ENCODE measurements at regions of chr10 and their contacts with region 1.

Region 1: DNA sequence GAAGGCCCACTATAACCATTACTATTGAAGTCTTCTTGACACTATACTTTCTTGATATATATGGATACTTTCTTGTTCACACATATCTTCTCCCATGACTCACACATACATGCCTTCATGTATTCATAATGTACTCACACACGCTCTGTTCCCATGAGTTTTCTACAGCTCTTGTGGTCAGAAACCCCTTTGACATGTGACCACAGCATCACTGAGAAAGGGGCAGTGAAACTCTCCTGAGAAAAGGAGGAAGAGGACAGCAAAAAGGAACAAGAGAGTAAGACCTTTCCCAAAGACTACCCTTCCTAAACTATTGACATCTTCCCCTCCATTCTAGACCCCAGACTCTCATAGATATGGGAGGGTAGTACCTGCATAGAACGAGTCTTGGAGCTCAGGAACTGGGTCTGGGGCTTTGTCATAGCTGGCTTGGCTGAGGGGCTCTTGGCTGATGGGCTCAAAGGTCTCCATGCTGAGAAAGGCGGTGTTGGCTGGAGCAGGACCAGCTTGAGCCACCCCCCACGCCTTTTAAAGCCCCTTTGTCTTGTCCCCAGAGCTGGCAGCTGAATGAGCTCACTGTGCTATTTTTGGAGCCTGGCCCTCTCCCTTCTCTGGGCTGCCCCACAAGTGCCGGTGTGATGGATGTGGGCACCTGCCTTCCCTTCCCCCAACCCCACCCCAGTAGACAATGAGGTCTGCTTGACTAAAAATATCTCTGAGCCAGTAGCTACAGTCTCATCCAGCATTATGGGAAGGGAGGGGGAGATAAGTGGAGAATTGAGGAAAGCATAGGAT is 5.1 kb downstream of the SYNPO2L start:
- DNase-seq: peak; percentile 58 to 81
- ATAC-seq: peak; percentile 42 to 75 (median 62)
- H3K4me3 ChIP-seq: peak overlapping the region in 7 of 10 donors; percentile 14 to 87 (median 29)
- H3K27ac ChIP-seq: peak overlapping the region; percentile 64 to 97 (median 88)
- H3K4me1 ChIP-seq: peaks cover 9 to 64% (median 32%) of the 10 kb centered on the region in 9 donors
- H3K27me3 ChIP-seq: no peaks in the 10 kb centered on the region
- CTCF ChIP-seq: no peak

Region 2: GRCh38 chr10:73717556-73717955 is 66.8 kb after region 1 on chr10:
- intact Hi-C with region 1: loop called in 1 of 10 experiments (anchors 10 kb)
- DNase-seq: no peak
- ATAC-seq: peak in 4 of 8 donors; percentile 33 to 49 (median 38)
- H3K4me3 ChIP-seq: no peak overlapping the region
- H3K27ac ChIP-seq: peak overlapping the region in 5 of 10 donors; percentile 7 to 74 (median 23)
- H3K4me1 ChIP-seq: peaks cover 0 to 27% (median 0%) of the 10 kb centered on the region in 9 donors
- H3K27me3 ChIP-seq: no peaks in the 10 kb centered on the region
- CTCF ChIP-seq: no peak

Region 3: GRCh38 chr10:73730153-73730906 is 79.6 kb after region 1 on chr10:
- intact Hi-C with region 1: loop called in 3 of 10 experiments (anchors 5 kb)
- DNase-seq: peak; percentile 86 to 88
- ATAC-seq: peak; percentile 89 to 97 (median 94)
- H3K4me3 ChIP-seq: peak overlapping the region; percentile 62 to 97 (median 82)
- H3K27ac ChIP-seq: peak overlapping the region; percentile 63 to 96 (median 92)
- H3K4me1 ChIP-seq: peaks cover 7 to 58% (median 28%) of the 10 kb centered on the region in 9 donors
- H3K27me3 ChIP-seq: no peaks in the 10 kb centered on the region
- CTCF ChIP-seq: no peak

Region 4: DNA sequence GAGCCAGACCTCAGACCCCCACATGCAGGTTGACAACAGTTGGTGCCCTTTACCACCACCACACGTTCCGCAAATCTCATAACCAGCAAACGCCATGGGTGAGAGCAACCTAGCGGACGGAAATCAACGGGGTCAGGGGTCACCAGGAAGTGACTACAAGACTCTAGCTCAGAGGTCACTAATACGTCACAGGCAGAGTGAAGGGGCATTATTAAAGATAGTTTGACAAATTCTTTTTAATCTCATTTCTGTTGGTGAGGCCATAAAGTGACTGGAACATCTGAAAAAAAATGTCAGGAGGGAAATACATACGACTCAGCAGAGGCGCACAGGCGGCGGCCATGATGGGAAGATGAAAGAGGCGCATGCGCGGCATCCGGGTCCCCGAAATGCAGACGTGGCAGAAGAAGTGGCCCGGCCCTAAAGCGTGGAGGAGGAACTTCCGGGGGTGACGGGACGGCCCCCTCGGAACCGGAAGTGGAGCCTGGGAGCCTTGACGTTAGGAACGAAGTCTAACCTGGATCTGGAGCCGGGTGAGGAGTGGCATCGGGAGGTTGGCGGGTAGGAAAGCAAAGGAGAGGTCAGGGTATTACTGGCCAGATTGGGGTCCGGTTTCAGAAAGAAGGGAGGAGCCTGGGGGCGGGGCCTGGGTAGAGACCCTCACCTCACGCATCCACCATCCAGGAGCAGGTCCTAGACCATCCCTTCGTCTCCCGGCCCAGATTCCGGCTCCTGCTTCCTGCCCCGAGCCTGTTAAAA is 93.3 kb after region 1 on chr10 and contains the start of gene SEC24C:
- intact Hi-C with region 1: loop called in 1 of 10 experiments (anchors 5 kb)
- DNase-seq: peak; percentile 97
- ATAC-seq: peak; percentile 93 to 98 (median 97)
- H3K4me3 ChIP-seq: peak within 1 kb of the TSS; percentile 69 to 94 (median 83)
- H3K27ac ChIP-seq: peak within 1 kb of the TSS; percentile 83 to 99 (median 92)
- H3K4me1 ChIP-seq: peaks cover 15 to 53% (median 43%) of the 10 kb centered on the region in 9 donors
- H3K27me3 ChIP-seq: no peaks in the 10 kb centered on the region
- CTCF ChIP-seq: peak in 2 of 9 donors; percentile 2 to 12
- total RNA-seq, gene SEC24C: 44.5 to 59.7 (median 51.5) TPM

Region 5: GRCh38 chr10:73785221-73785720 is 134.5 kb after region 1 on chr10 and contains the start of gene ZSWIM8:
- intact Hi-C with region 1: no loop called
- DNase-seq: peak; percentile 86 to 92
- ATAC-seq: peak; percentile 87 to 95 (median 92)
- H3K4me3 ChIP-seq: peak within 1 kb of the TSS; percentile 68 to 97 (median 92)
- H3K27ac ChIP-seq: peak within 1 kb of the TSS; percentile 74 to 97 (median 90)
- H3K4me1 ChIP-seq: peaks cover 15 to 67% (median 59%) of the 10 kb centered on the region in 9 donors
- H3K27me3 ChIP-seq: no peaks in the 10 kb centered on the region
- CTCF ChIP-seq: peak in 3 of 9 donors; percentile 10 to 20 (median 14)
- total RNA-seq, gene ZSWIM8: 35.2 to 72.5 (median 43.5) TPM